ENCODE measurements at regions of chr3 and their contacts with region 1.

Region 1: GRCh38 chr3:123980539-123980938 is 11.4 kb downstream of the ROPN1 start:
- DNase-seq: no peak
- H3K4me3 ChIP-seq: no peak overlapping the region
- H3K4me3 Mint-ChIP-seq: no peak overlapping the region
- H3K27ac ChIP-seq: no peak overlapping the region
- H3K27ac Mint-ChIP-seq: no peak overlapping the region
- H3K4me1 ChIP-seq: peaks cover 6% of the 10 kb centered on the region
- H3K4me1 Mint-ChIP-seq: peaks cover 0 to 3% (median 0%) of the 10 kb centered on the region in 4 donors
- H3K27me3 ChIP-seq: no peaks in the 10 kb centered on the region
- H3K27me3 Mint-ChIP-seq: peaks cover 22 to 28% of the 10 kb centered on the region in 2 donors

Region 2: GRCh38 chr3:123993818-123994217 is 13.3 kb after region 1 on chr3:
- CTCF ChIA-PET with region 1: interaction called, 13 read pairs
- POLR2A ChIA-PET with region 1: no interaction called
- intact Hi-C with region 1: no loop called
- DNase-seq: no peak
- H3K4me3 ChIP-seq: no peak overlapping the region
- H3K4me3 Mint-ChIP-seq: no peak overlapping the region
- H3K27ac ChIP-seq: no peak overlapping the region
- H3K27ac Mint-ChIP-seq: no peak overlapping the region
- H3K4me1 ChIP-seq: no peaks in the 10 kb centered on the region
- H3K4me1 Mint-ChIP-seq: peaks cover 0 to 2% (median under 1%) of the 10 kb centered on the region in 4 donors
- H3K27me3 ChIP-seq: peaks cover 8% of the 10 kb centered on the region
- H3K27me3 Mint-ChIP-seq: peaks cover 20 to 29% of the 10 kb centered on the region in 2 donors

Region 3: DNA sequence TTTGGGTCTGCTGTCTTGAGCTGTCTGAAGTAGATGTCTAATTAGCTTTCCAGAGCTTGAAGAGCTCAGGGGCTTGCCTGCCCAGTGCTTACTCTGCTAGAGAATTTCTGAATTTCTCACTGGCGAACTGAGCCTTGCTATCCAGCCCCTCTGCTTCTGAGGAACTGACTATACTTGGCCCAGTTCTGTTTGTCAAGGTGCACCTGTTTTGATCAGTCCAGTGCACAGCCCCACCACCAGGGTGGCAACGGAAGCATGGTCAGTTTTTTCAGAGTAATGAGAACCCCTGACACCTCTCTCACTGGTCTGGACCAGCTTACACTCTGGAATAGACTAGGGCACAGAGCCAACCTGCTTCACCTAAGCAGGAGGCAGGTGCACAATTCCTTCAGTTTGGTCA is 881.5 kb after region 1 on chr3:
- CTCF ChIA-PET with region 1: no interaction called
- POLR2A ChIA-PET with region 1: no interaction called
- intact Hi-C with region 1: no loop called
- DNase-seq: no peak
- H3K4me3 ChIP-seq: no peak overlapping the region
- H3K4me3 Mint-ChIP-seq: no peak overlapping the region
- H3K27ac ChIP-seq: no peak overlapping the region
- H3K27ac Mint-ChIP-seq: no peak overlapping the region
- H3K4me1 ChIP-seq: no peaks in the 10 kb centered on the region
- H3K4me1 Mint-ChIP-seq: no peaks in the 10 kb centered on the region
- H3K27me3 ChIP-seq: no peaks in the 10 kb centered on the region
- H3K27me3 Mint-ChIP-seq: peaks cover 6 to 8% of the 10 kb centered on the region in 2 donors